ENCODE measurements at regions of chr2 and their contacts with region 1.

Region 1: DNA sequence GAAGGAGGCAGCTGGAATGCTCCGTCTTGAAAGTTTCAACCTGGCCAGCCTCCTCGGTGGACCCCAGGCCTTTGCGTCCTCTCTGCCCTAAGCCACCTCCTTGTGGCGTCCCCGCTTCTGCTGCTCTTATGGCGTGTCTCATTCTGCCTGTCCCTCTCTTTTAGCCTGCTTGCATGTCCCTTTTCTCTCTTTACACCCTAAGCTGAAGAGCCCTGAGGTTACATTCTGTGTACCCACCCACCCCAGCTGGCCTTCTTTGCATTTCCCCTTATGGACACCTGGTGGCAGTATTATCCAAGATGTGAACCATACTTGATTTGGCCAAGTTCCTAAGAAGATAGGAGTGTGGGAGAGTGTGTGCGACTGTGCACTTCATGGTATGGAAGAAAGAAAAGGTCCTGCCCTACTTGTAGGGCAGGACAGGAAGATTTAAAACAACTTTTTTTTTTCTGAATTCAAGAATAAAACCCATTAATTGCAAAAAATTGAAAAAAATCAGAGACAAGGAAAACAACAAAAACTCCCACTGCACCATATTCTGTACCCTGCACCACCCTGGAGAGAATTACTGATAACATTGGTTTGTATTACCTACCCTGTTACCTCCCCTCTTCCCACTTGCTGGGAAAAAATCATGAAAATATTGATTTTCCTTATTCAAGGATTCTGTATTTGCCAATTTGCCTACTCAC is 77.4 kb downstream of the DYSF start:
- DNase-seq: no peak
- H3K4me3 ChIP-seq: no peak overlapping the region
- H3K27ac ChIP-seq: no peak overlapping the region
- H3K4me1 ChIP-seq: no peaks in the 10 kb centered on the region
- H3K27me3 ChIP-seq: no peaks in the 10 kb centered on the region
- CTCF ChIP-seq: peak; percentile 57 to 68 (median 59)
- EP300 ChIP-seq: no peak
- POLR2A ChIP-seq: no peak

Region 2: GRCh38 chr2:71856773-71857525 is 326.2 kb after region 1 on chr2:
- intact Hi-C with region 1: no loop called
- DNase-seq: no peak
- H3K4me3 ChIP-seq: no peak overlapping the region
- H3K27ac ChIP-seq: no peak overlapping the region
- H3K4me1 ChIP-seq: peaks cover 0 to 9% (median 7%) of the 10 kb centered on the region in 4 donors
- H3K27me3 ChIP-seq: peaks cover 0 to 42% (median 0%) of the 10 kb centered on the region in 4 donors
- CTCF ChIP-seq: no peak
- EP300 ChIP-seq: no peak
- POLR2A ChIP-seq: no peak

Region 3: DNA sequence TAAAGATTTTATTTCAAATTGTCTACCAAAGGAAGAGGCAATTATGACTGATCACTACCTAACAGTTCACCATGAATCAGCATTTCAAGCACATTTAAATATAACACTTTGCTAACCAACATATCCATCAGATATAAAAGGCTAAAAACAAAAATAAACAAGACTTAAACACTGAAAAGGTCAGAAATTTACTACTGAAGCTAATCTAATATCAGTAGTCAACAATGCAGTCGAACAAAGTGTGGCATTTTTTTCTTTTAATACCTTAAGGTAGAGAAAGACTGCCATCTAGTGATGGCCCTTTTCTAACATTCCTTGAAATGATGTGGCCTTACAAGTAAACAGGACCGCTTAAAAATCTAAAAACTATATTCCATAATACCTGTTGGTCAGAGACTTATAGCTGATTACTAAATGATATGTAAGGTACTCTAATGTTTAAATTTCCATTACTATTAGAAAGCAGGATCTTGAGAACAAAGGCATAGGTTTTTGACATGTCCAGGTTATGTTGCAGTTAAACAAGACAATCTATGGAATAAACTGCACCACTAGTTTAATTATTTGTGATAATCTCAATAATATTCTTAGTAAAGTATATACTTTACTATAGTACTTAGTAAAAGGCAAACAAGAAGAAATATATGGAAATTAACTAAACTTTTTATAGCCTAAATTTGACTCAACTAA is 1215.0 kb after region 1 on chr2:
- intact Hi-C with region 1: loop called (anchors 10 kb)
- DNase-seq: no peak
- H3K4me3 ChIP-seq: no peak overlapping the region
- H3K27ac ChIP-seq: no peak overlapping the region
- H3K4me1 ChIP-seq: peaks cover 0 to 10% (median 3%) of the 10 kb centered on the region in 4 donors
- H3K27me3 ChIP-seq: no peaks in the 10 kb centered on the region
- CTCF ChIP-seq: peak; percentile 64 to 67 (median 65)
- EP300 ChIP-seq: no peak
- POLR2A ChIP-seq: no peak

Measured in esophagus muscularis mucosa (tissue), 4 donors.